AG04450 (cell line): ENCODE measurements at regions of chr2 and their contacts with region 1.

Region 1: DNA sequence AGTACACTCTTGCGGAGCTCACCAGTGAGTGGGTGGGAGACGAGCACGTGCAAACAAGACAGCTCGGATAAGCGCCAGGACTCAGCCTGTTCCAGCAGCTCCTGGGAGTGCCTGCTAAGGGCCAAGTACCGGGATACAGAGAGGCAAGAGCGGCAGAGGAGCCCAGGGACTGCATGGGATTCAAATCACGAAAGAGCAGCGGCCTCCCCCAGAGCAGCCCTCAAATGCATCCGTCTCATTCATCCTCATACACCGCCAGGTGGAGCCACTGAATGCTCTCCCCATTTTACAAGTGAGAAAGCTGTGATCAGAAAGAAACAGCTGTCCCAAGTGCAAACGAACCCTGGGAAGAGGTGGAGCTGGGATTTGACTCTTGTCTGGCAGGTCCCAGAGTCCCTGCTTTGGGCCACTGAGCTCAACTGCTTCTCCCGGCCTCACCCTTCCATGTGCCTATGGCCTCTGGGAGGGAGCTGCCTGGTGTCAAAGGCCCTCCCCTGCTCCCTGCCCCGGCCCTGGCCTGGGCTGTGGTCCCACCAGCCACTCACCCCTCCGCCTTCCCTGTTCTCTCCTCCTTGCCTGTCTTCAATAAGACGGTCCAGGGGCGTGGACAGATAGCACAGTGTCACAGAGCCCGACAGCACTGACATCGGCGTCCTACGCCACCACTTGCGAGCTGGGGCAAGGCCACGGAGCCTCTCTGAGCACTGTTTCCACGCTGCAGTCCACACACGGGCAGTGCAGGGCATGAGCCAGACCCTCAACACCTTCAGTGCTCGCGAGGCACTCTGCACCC is 72.8 kb upstream of the TAF1B start:
- DNase-seq: peak; percentile 26
- H3K4me3 ChIP-seq: peak overlapping the region; percentile 10; the same call in 1 of the 2 replicates
- H3K27ac ChIP-seq: peak overlapping the region; percentile 21
- H3K27me3 ChIP-seq: no peaks in the 10 kb centered on the region
- CTCF ChIP-seq: peak; percentile 78

Region 2: GRCh38 chr2:9555297-9556141 is 215.0 kb before region 1 on chr2 and contains the start of gene ADAM17:
- CTCF ChIA-PET with region 1: interaction called, 17 read pairs
- POLR2A ChIA-PET with region 1: no interaction called
- DNase-seq: peak; percentile 85
- H3K4me3 ChIP-seq: peak within 1 kb of the TSS; percentile 98
- H3K27ac ChIP-seq: peak within 1 kb of the TSS; percentile 97
- H3K27me3 ChIP-seq: no peaks in the 10 kb centered on the region
- CTCF ChIP-seq: peak; percentile 65
- polyA plus RNA-seq, gene ADAM17: 12.6 and 14.0 TPM in 2 replicates

Region 3: GRCh38 chr2:9618410-9618809 is 152.1 kb before region 1 on chr2:
- CTCF ChIA-PET with region 1: interaction called, 12 read pairs
- POLR2A ChIA-PET with region 1: no interaction called
- DNase-seq: no peak
- H3K4me3 ChIP-seq: no peak overlapping the region
- H3K27ac ChIP-seq: no peak overlapping the region
- H3K27me3 ChIP-seq: no peaks in the 10 kb centered on the region
- CTCF ChIP-seq: no peak

Region 4: GRCh38 chr2:9638532-9638931 is 132.0 kb before region 1 on chr2:
- CTCF ChIA-PET with region 1: interaction called, 16 read pairs
- POLR2A ChIA-PET with region 1: interaction called, 3 read pairs
- DNase-seq: peak; percentile 92
- H3K4me3 ChIP-seq: peak overlapping the region; percentile 41
- H3K27ac ChIP-seq: peak overlapping the region; percentile 77
- H3K27me3 ChIP-seq: no peaks in the 10 kb centered on the region
- CTCF ChIP-seq: no peak

Region 5: GRCh38 chr2:9799665-9800632 is 29.4 kb after region 1 on chr2:
- CTCF ChIA-PET with region 1: interaction called, 11 read pairs
- POLR2A ChIA-PET with region 1: no interaction called
- DNase-seq: peak; percentile 44
- H3K4me3 ChIP-seq: no peak overlapping the region
- H3K27ac ChIP-seq: no peak overlapping the region
- H3K27me3 ChIP-seq: no peaks in the 10 kb centered on the region
- CTCF ChIP-seq: peak; percentile 99

Region 6: DNA sequence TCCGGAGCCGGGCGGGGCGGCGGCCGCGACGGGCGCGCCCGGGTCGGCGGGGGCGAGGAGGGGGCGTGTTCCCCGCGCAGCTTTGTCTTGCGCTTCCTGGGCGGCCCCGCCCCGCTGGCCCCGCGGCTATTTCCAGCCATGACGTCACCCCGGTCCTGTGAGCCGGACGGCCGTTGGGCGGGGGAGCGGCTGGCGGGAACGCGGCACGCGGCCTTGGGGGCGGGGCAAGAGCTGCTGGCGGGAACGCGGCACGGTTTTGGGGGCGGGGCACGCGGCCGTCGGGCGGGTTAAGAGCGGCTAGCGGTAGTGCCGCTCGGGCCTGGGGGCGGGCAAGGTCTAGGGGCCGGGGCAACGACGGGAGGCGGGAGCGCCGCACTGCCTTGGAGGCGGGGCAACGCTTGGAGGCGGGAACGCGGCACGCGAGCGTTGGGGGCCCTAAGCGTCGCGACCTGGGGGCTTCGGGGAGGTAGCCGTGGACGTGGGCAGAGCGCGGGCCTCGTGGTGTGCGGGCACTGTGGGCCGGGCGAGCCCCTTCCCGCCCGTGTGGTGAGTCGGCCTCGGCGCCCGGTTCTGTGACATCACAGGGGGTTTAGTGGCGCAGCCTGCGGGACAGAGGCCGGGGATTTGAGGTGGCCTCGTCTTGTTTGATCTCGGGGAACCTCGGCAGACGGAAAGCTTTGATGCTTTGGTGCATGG is 273.6 kb after region 1 on chr2:
- CTCF ChIA-PET with region 1: interaction called, 37 read pairs
- POLR2A ChIA-PET with region 1: no interaction called
- DNase-seq: peak; percentile 66
- H3K4me3 ChIP-seq: peak overlapping the region; percentile 63
- H3K27ac ChIP-seq: no peak overlapping the region
- H3K27me3 ChIP-seq: peaks cover 5% of the 10 kb centered on the region
- CTCF ChIP-seq: no peak